Activated B cell treated with CpG ODN at 0.5 μM for 24 hours (primary cell): ENCODE measurements at regions of chr2 and their contacts with region 1.

Region 1: GRCh38 chr2:12716282-12717190 is at the start of gene TRIB2:
- DNase-seq: peak; percentile 79
- ATAC-seq: peak; percentile 84
- H3K4me3 Mint-ChIP-seq: peak within 1 kb of the TSS; percentile 97
- H3K27ac Mint-ChIP-seq: peak within 1 kb of the TSS; percentile 91
- H3K4me1 Mint-ChIP-seq: peaks cover 42% of the 10 kb centered on the region
- H3K27me3 Mint-ChIP-seq: no peaks in the 10 kb centered on the region
- CTCF ChIP-seq: no peak
- total RNA-seq, gene TRIB2: 17.7 and 19.3 TPM in 2 replicates

Region 2: GRCh38 chr2:11465497-11466406 is 1250.8 kb before region 1 on chr2 and contains the start of gene E2F6:
- CTCF ChIA-PET with region 1: no interaction called
- POLR2A ChIA-PET with region 1: no interaction called
- intact Hi-C with region 1: loop called (anchors 5 kb)
- DNase-seq: peak; percentile 93
- ATAC-seq: peak; percentile 81
- H3K4me3 Mint-ChIP-seq: peak within 1 kb of the TSS; percentile 98
- H3K27ac Mint-ChIP-seq: peak within 1 kb of the TSS; percentile 89
- H3K4me1 Mint-ChIP-seq: peaks cover 31% of the 10 kb centered on the region
- H3K27me3 Mint-ChIP-seq: no peaks in the 10 kb centered on the region
- CTCF ChIP-seq: no peak
- total RNA-seq, gene E2F6: 11.8 and 12.4 TPM in 2 replicates

Region 3: GRCh38 chr2:11945139-11946126 is 771.1 kb before region 1 on chr2:
- CTCF ChIA-PET with region 1: no interaction called
- POLR2A ChIA-PET with region 1: no interaction called
- intact Hi-C with region 1: loop called (anchors 5 kb)
- DNase-seq: no peak
- ATAC-seq: peak; percentile 82
- H3K4me3 Mint-ChIP-seq: peak overlapping the region; percentile 73
- H3K27ac Mint-ChIP-seq: peak overlapping the region; percentile 82
- H3K4me1 Mint-ChIP-seq: peaks cover 29% of the 10 kb centered on the region
- H3K27me3 Mint-ChIP-seq: no peaks in the 10 kb centered on the region
- CTCF ChIP-seq: no peak

Region 4: DNA sequence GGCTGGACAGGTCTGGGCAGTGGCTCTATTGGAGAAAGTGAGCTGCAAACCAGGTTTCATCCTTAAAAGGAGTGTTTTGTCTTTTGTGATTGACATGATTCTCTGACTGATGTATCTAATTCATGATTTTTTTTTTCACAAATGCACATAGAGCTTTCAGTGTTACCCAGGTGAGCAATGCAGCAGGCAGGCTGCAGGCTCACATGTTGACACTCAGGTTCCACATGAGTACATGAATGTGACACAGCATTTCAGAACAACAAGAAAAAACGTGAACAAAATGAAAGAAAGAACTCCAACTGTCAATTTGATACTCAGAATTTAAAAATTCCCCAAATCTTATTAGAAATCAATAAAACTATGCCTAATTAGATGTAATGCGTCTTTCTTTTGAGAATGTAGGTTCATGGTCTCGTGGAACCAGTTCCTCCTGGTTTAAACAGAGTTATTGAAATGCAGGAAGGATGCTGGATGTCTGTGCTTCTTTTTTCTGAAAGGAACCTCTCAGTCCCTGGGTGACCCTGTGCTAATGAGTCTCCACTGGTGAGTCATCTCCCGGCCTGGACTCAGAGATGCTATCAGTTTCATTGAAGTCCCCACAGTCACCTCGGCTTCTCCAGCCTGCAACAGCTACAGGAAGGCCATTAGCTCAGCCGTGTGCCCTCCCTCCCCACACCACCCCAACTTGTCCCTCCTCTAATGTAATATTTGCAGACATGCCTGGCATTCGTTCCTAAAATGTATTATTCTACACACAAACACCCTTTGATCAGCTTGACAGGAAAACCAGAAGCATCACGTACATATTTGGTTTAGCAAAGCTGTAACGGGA is 539.7 kb before region 1 on chr2:
- CTCF ChIA-PET with region 1: no interaction called
- POLR2A ChIA-PET with region 1: no interaction called
- intact Hi-C with region 1: loop called (anchors 2 kb)
- DNase-seq: no peak
- ATAC-seq: no peak
- H3K4me3 Mint-ChIP-seq: peak overlapping the region; percentile 33
- H3K27ac Mint-ChIP-seq: peak overlapping the region; percentile 2
- H3K4me1 Mint-ChIP-seq: peaks cover 39% of the 10 kb centered on the region
- H3K27me3 Mint-ChIP-seq: no peaks in the 10 kb centered on the region
- CTCF ChIP-seq: no peak

Region 5: DNA sequence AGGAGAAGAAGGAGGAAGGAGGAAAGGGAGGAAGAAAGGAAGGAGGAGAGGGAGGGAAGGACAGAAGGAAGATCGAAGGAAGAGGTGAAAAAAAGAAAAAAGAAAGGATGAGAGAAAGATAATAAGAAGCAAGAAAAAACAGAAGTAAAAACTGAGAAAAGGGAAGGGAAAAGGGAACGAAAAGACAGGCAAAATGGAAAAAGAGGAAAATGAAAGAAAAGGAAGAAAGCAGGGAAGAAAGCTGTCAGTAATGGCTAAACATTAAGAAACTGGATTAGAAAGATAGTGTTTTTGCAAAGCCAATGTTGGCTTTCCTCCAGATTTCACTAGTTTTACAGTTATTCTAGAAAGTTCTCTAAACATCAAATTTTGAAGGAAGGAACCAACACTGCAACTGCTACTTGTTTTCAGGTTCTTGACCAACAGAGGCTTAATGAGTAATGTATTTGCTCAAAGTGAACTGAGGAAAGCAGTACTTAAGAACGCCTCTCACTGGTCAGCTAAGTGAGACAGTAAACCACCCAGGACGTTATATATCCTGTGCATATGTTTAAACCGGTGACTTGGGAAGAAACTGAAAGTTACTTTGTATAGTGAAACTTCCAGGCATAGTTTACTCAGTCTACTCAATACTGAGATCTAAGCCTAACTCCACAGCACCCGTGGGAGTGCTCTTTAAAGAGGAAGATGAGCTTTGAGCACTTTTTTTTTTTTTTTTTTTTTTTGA is 286.0 kb before region 1 on chr2:
- CTCF ChIA-PET with region 1: interaction called, 25 read pairs
- POLR2A ChIA-PET with region 1: interaction called, 3 read pairs
- intact Hi-C with region 1: loop called (anchors 5 kb)
- DNase-seq: no peak
- ATAC-seq: peak; percentile 71
- H3K4me3 Mint-ChIP-seq: peak overlapping the region; percentile 40
- H3K27ac Mint-ChIP-seq: no peak overlapping the region
- H3K4me1 Mint-ChIP-seq: peaks cover 15% of the 10 kb centered on the region
- H3K27me3 Mint-ChIP-seq: no peaks in the 10 kb centered on the region
- CTCF ChIP-seq: no peak

Region 6: DNA sequence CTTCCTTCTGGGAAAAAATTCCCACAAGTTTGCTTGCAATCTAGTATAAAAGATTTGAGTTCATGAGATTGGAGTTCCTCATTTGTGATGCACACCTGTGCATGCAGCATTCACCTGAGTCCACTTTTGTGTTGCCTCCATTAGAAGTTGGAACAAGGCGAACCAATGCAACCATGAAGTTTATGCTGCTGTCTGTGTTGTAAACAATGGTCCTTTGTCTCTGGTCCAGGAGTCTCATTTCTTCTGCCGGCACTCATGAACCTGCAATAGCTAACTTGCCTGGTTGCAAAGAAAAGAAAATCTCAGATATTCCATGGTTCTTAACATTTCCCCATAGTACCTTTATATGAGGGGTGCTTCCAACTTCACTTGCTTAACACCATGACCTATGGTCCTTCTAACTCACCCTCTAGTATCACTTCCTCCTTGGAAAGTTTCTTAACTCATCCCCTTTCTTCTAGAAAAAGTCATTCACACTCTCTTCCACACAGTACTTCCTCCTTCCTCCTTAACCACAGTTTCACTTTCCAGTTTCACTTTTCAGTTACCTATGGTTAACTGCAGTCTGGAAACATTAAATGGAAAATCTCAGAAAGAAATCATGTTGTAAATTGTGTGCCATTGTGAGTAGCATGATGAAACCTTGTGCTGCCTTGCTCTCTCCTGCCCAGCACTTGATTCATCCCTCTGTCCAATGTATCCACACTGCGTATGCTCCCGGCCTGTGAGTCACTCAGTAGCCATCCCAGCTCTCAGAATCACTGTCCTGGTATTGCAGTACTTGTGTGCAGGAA is 128.6 kb before region 1 on chr2:
- CTCF ChIA-PET with region 1: interaction called, 6 read pairs
- POLR2A ChIA-PET with region 1: no interaction called
- intact Hi-C with region 1: loop called (anchors 2 kb)
- DNase-seq: no peak
- ATAC-seq: peak; percentile 91
- H3K4me3 Mint-ChIP-seq: peak overlapping the region; percentile 36
- H3K27ac Mint-ChIP-seq: peak overlapping the region; percentile 70
- H3K4me1 Mint-ChIP-seq: peaks cover 56% of the 10 kb centered on the region
- H3K27me3 Mint-ChIP-seq: no peaks in the 10 kb centered on the region
- CTCF ChIP-seq: no peak

Region 7: DNA sequence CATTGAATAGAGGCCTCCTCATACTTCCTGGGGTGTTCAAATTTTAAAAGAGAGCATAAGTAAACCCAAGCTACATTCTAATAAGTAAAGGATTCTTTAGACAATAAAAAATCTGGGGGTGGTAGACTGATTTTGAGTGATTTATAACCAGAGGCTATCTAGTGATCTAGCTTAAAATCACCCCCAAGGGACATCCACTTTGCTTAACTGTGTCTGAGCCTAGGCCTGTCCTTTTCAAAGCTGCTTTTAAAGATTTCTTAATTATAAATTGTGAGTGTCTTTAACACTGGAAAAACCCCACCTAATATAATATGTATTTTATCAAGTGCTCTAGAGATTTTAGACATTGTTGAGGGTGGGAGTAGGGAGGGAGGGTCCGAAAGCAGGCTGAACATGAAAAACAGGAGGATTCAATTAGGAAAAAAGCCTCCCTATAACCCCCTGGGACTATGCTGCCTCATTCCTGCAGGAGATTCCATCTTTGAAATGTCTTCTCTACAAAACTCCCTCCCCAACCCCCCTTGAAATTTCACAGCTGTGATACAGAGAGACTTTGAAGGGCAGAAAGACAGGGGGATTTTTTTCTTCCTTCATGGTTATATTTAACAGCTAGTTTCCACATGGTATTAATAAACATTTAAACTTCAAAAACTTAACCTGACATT is 57.7 kb after region 1 on chr2:
- CTCF ChIA-PET with region 1: no interaction called
- POLR2A ChIA-PET with region 1: no interaction called
- intact Hi-C with region 1: no loop called
- DNase-seq: no peak
- ATAC-seq: no peak
- H3K4me3 Mint-ChIP-seq: no peak overlapping the region
- H3K27ac Mint-ChIP-seq: no peak overlapping the region
- H3K4me1 Mint-ChIP-seq: no peaks in the 10 kb centered on the region
- H3K27me3 Mint-ChIP-seq: peaks cover 27% of the 10 kb centered on the region
- CTCF ChIP-seq: no peak

Region 8: DNA sequence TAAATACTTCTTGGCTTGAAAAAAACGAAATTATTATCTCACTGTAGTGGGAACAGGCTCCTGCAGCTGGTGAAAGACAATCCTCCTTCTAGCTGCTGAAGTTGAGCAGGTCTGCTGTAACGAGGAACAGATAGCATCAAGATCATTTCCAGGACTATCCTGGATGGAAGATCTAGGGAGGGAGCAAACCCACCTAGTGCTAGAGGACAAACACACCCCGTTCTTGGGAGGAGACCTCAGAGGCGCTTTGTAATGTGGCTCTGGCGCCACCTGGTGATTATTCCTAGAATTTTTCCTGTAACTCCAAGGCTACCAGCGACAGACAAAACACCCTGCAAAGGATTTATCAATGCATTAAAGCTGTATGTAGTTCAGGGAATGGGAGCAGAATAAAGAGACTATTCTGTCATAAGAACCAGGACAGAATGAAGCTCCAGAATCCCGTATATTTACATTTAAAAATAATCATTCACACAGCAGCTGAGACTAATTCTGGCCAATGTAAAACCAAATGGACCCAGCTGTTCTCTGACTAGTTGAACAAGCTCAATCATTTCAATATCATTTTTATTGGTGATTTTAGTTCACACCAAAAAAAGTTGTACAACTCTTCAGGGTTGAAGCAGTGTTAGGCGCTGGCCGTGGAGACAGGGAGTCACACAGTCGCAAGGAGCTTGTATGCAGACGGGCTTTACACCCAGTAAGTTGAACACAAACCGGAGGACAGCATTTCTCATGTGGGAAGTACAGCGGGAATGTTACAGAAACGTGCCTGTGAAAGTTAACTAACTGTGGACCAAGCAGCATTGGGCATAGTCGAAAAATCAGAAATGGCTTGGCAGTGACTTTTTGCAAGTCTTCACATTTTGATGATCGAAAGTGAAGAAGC is 290.5 kb after region 1 on chr2:
- CTCF ChIA-PET with region 1: interaction called, 18 read pairs
- POLR2A ChIA-PET with region 1: no interaction called
- intact Hi-C with region 1: loop called (anchors 1 kb)
- DNase-seq: peak; percentile 21
- ATAC-seq: peak; percentile 65
- H3K4me3 Mint-ChIP-seq: no peak overlapping the region
- H3K27ac Mint-ChIP-seq: no peak overlapping the region
- H3K4me1 Mint-ChIP-seq: peaks cover 3% of the 10 kb centered on the region
- H3K27me3 Mint-ChIP-seq: peaks cover 17% of the 10 kb centered on the region
- CTCF ChIP-seq: peak; percentile 30

Region 9: GRCh38 chr2:14297345-14297744 is 1580.8 kb after region 1 on chr2:
- CTCF ChIA-PET with region 1: no interaction called
- POLR2A ChIA-PET with region 1: no interaction called
- intact Hi-C with region 1: no loop called
- DNase-seq: no peak
- ATAC-seq: no peak
- H3K4me3 Mint-ChIP-seq: no peak overlapping the region
- H3K27ac Mint-ChIP-seq: no peak overlapping the region
- H3K4me1 Mint-ChIP-seq: no peaks in the 10 kb centered on the region
- H3K27me3 Mint-ChIP-seq: no peaks in the 10 kb centered on the region
- CTCF ChIP-seq: no peak